ENCODE measurements at regions of chr1 and their contacts with region 1.

Region 1: DNA sequence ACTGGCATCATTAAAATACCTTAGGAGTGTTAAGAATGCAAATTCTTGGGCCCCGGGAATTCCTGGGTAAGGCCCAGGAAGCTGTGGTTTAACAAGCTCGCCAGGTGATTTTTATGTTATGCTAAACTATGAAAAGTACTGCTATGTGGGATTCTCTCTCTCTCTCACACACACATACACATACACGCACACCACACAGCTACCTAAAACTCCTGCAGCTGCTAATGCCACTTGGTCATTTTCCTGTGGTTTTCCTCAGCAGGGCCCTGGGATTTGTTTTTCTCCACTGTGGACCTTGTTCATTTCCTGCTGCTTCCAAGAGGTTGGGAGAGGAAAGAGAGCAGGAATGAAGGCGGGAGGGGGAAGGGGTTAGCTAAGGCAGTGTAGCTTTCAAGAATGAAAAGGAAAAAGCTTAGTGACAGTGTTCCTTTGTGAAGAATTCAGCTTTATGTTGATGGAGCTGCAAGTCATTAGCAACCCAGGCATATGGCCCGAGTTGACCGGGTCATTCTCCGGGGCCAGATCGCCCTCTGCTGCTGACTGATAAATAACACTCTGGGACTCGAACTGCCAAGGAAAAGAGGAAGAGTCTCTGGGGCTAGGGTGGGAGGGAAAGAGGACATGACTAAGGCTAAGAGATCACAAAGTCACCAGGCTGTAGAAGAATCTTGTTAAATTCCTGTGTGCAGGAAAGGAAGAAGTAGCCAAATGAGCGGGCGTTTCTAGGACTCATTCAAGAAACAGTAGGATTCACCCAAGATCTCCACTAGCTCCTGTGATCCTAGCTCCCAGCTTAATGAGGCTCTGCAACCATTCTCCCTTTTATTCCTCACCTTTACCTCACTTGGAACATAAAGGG is 30.5 kb upstream of the LRIG2 start:
- DNase-seq: peak; percentile 64
- H3K4me3 ChIP-seq: no peak overlapping the region
- H3K27ac ChIP-seq: no peak overlapping the region
- H3K4me1 ChIP-seq: peaks cover 4% of the 10 kb centered on the region
- CTCF ChIP-seq: peak; percentile 78

Region 2: DNA sequence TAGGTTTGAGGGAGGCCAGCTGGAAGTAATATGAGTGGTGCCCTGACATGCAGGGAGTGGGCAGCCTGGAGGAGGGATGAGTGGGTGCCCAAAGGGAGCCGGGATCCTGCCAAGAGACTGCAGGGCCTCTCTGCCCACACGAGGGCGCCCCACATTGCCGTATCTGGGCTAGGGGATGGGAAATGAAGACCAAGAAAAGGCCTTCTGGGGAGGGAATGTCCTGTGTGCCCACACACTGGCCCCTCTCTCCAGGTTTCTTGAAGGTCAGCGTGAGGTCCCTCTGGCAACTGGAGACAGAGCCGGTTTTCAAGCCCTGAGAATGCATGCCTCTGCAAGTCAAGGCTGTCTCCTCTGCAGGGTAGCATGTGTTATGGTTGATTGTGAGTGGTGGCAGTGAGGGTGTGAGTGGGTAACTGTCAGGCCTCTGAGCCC is 233.2 kb before region 1 on chr1:
- CTCF ChIA-PET with region 1: no interaction called
- POLR2A ChIA-PET with region 1: no interaction called
- intact Hi-C with region 1: loop called (anchors 1 kb)
- DNase-seq: peak; percentile 57
- H3K4me3 ChIP-seq: no peak overlapping the region
- H3K27ac ChIP-seq: no peak overlapping the region
- H3K4me1 ChIP-seq: no peaks in the 10 kb centered on the region
- CTCF ChIP-seq: peak; percentile 92

Region 3: DNA sequence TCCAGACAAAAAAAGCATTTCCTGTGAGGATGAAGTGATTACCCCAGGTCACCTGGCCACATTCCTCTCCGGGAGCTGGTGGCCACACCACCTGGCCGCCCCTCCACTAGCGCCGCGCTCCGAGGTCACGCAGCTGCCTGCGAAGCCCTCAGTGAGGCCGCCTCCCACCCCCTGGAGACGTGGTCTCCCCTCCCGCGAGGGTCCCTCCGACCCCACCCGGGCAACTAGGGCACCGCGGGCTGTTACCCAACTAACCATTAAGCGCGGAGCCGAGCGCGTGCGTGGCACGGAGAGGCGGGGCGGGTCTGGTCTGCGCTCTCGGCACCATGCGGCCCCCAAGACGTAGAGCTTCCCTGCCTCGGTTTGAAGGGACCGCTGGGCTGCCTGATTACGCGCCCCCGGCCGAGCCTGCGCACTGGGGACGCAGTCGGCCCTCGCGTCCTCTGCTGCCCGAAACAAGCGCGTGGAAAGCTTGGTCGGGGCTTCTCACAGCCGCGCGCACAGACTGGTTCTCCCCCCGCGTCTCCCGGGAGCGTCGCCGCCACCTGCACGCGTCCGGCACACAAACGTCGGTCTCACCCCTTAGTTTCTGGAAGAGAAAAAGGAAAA is 193.0 kb before region 1 on chr1:
- CTCF ChIA-PET with region 1: no interaction called
- POLR2A ChIA-PET with region 1: no interaction called
- intact Hi-C with region 1: no loop called
- DNase-seq: no peak
- H3K4me3 ChIP-seq: no peak overlapping the region
- H3K27ac ChIP-seq: no peak overlapping the region
- H3K4me1 ChIP-seq: no peaks in the 10 kb centered on the region
- CTCF ChIP-seq: no peak

Region 4: GRCh38 chr1:112882271-112882744 is 160.2 kb before region 1 on chr1:
- CTCF ChIA-PET with region 1: interaction called, 4 read pairs
- POLR2A ChIA-PET with region 1: interaction called, 3 read pairs
- intact Hi-C with region 1: loop called (anchors 1 kb)
- DNase-seq: no peak
- H3K4me3 ChIP-seq: no peak overlapping the region
- H3K27ac ChIP-seq: no peak overlapping the region
- H3K4me1 ChIP-seq: no peaks in the 10 kb centered on the region
- CTCF ChIP-seq: no peak